H1 (cell line): ENCODE measurements at regions of chr1 and their contacts with region 1.

Region 1: DNA sequence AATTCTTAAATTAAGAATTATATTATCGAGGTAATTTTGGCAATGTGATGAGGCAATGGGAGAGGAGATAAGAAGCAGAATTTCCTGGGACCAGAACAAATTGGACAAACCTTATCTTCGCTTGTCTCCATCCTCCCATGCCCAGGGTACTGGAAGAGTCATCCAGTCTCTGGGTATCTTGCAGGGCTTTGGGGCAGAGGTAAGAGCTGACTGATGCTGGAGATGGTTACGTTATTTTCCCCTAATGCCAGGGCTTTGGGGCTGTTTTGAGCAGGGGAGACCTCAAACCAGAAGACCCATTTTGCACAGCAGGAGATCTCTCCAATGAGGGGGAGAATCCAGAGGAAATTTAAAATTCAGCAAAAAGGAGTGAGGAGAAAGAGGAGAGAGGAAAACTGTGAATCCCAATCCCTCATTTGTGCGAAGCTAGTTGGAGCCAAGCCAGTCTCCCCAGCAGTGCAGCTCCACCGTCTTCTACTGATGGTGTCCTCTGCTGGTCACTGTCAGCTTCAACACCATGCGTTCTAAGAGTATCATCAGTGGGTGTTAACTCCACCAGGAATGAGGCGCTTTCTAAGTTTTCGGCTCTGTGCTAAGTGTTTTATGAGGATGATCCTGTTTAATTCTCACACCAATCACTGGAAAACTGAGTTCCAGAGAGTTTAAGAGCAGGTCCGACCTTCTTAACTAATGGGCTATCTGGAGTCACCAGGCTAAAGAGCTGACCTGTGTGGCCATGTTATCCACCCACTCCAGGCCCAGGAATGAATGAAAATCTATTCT is 86.8 kb upstream of the CD34 start:
- DNase-seq: peak in 1 of 2 experiments; percentile 72
- H3K4me3 ChIP-seq: no peak overlapping the region
- H3K27ac ChIP-seq: no peak overlapping the region
- H3K4me1 ChIP-seq: peaks cover 0 to 9% (median 6%) of the 10 kb centered on the region in 4 experiments; a peak in 6 of 7 replicates
- H3K27me3 ChIP-seq: no peaks in the 10 kb centered on the region
- CTCF ChIP-seq: peak; percentile 80 to 92 (median 87)
- EP300 ChIP-seq: no peak
- POLR2A ChIP-seq: no peak
- RAD21 ChIP-seq: peak; percentile 47 to 59

Region 2: DNA sequence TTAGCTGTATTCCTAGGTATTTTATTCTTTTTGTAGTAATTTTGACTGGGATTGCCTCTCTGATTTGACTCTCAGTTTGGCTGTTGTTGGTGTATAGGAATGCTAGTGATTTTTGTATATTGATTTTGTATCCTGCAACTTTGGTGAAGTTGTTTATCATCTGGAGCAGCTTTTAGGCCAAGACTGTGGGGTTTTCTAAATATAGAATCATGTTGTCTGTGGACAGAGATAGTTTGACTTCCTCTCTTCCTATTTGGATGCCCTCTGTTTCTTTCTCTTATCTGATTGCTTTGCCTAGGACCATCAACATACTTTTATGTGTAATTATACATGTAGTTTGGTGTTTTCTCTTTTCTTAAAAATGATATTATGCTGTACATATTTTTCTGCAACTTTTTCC is 218.7 kb before region 1 on chr1:
- CTCF ChIA-PET with region 1: no interaction called
- POLR2A ChIA-PET with region 1: no interaction called
- DNase-seq: no peak
- H3K4me3 ChIP-seq: no peak overlapping the region
- H3K27ac ChIP-seq: no peak overlapping the region
- H3K4me1 ChIP-seq: no peaks in the 10 kb centered on the region
- H3K27me3 ChIP-seq: no peaks in the 10 kb centered on the region
- CTCF ChIP-seq: no peak
- EP300 ChIP-seq: no peak
- POLR2A ChIP-seq: no peak
- RAD21 ChIP-seq: no peak

Region 3: DNA sequence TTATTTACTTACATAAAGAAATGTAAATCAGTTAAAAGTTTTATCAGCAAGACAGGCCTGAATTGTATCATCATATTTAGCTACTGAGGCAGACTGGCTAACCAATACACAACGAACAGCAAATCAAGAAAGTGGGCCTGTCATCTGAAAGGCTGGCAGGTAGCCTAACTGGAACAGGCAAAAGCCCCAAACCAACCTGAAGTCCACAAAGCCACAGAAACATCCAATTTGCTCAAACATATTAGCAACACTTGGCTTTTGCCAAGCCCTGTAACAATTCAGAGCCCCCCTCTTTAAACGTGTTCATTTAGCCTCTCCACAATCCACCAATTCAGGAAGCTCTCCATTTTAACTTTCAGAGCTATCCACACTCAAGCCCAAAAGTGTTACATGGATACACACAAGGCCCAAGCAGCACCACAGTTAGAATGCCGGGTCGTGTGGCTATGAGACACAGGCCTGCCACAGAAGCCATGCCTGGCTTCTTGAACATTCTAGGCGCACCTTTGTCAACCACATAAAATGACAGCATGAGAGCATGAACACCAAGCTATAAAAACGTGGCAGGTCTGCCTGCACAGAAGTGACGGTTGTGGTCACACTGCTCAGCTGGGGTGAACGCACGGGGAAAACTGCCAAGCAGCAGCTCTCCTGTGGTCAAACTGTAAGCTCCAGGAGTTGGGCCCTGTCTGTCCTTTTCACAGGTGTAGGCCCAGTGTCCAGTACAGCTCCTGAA is 136.1 kb before region 1 on chr1:
- CTCF ChIA-PET with region 1: no interaction called
- POLR2A ChIA-PET with region 1: no interaction called
- DNase-seq: no peak
- H3K4me3 ChIP-seq: no peak overlapping the region
- H3K27ac ChIP-seq: no peak overlapping the region
- H3K4me1 ChIP-seq: no peaks in the 10 kb centered on the region; a peak in 1 of 7 replicates
- H3K27me3 ChIP-seq: no peaks in the 10 kb centered on the region
- CTCF ChIP-seq: no peak
- EP300 ChIP-seq: no peak
- POLR2A ChIP-seq: no peak
- RAD21 ChIP-seq: no peak

Region 4: DNA sequence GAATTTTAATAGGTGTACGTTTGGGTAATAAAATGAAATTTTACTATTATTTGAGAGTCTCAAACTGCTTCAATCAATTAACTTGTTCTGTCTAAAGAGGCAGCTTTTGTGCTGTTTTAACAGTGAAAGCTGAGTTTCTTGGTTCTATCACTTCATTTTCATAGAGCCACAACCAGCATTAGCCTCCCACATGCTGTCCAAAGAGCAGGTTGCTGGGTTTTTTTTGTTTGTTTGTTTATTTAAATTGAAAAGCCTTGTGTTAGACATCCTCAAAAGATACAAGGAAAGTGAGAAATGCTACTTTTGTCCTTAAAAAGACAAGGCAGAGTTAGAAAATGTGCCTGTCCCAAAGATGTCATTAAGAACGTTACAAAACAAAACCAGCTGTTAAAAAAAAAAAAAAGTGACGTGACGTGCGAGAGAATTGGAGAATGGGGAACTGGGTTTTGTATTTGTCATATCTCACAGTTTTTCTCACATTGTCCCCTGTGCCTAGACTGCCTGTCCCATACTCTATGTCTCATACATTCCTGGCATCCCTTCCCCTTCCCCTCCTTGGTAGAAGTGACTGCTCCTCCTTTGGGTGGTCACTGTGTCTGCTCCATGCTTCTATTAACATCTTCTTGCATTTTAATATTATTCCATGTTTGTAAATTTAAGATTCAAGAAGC is 23.6 kb before region 1 on chr1:
- CTCF ChIA-PET with region 1: interaction called, 13 read pairs
- POLR2A ChIA-PET with region 1: no interaction called
- DNase-seq: no peak
- H3K4me3 ChIP-seq: no peak overlapping the region
- H3K27ac ChIP-seq: no peak overlapping the region
- H3K4me1 ChIP-seq: no peaks in the 10 kb centered on the region
- H3K27me3 ChIP-seq: no peaks in the 10 kb centered on the region
- CTCF ChIP-seq: no peak
- EP300 ChIP-seq: no peak
- POLR2A ChIP-seq: no peak
- RAD21 ChIP-seq: no peak

Region 5: GRCh38 chr1:208013210-208013609 is 15.5 kb after region 1 on chr1:
- CTCF ChIA-PET with region 1: interaction called, 11 read pairs
- POLR2A ChIA-PET with region 1: no interaction called
- DNase-seq: no peak
- H3K4me3 ChIP-seq: no peak overlapping the region
- H3K27ac ChIP-seq: no peak overlapping the region
- H3K4me1 ChIP-seq: no peaks in the 10 kb centered on the region
- H3K27me3 ChIP-seq: no peaks in the 10 kb centered on the region
- CTCF ChIP-seq: no peak
- EP300 ChIP-seq: no peak
- POLR2A ChIP-seq: no peak
- RAD21 ChIP-seq: no peak

Region 6: GRCh38 chr1:208029381-208030287 is 32.0 kb after region 1 on chr1:
- CTCF ChIA-PET with region 1: interaction called, 20 read pairs
- POLR2A ChIA-PET with region 1: no interaction called
- DNase-seq: no peak
- H3K4me3 ChIP-seq: no peak overlapping the region
- H3K27ac ChIP-seq: no peak overlapping the region
- H3K4me1 ChIP-seq: no peaks in the 10 kb centered on the region
- H3K27me3 ChIP-seq: no peaks in the 10 kb centered on the region
- CTCF ChIP-seq: no peak
- EP300 ChIP-seq: no peak
- POLR2A ChIP-seq: no peak
- RAD21 ChIP-seq: no peak

Region 7: GRCh38 chr1:208093754-208094719 is 96.4 kb after region 1 on chr1:
- CTCF ChIA-PET with region 1: interaction called, 13 read pairs
- POLR2A ChIA-PET with region 1: no interaction called
- DNase-seq: peak; percentile 39 to 90
- H3K4me3 ChIP-seq: no peak overlapping the region
- H3K27ac ChIP-seq: no peak overlapping the region
- H3K4me1 ChIP-seq: peaks cover 1 to 7% (median 4%) of the 10 kb centered on the region in 4 experiments; a peak in 5 of 7 replicates
- H3K27me3 ChIP-seq: no peaks in the 10 kb centered on the region
- CTCF ChIP-seq: peak; percentile 88 to 94 (median 89)
- EP300 ChIP-seq: no peak
- POLR2A ChIP-seq: no peak
- RAD21 ChIP-seq: peak; percentile 76 to 85

Region 8: DNA sequence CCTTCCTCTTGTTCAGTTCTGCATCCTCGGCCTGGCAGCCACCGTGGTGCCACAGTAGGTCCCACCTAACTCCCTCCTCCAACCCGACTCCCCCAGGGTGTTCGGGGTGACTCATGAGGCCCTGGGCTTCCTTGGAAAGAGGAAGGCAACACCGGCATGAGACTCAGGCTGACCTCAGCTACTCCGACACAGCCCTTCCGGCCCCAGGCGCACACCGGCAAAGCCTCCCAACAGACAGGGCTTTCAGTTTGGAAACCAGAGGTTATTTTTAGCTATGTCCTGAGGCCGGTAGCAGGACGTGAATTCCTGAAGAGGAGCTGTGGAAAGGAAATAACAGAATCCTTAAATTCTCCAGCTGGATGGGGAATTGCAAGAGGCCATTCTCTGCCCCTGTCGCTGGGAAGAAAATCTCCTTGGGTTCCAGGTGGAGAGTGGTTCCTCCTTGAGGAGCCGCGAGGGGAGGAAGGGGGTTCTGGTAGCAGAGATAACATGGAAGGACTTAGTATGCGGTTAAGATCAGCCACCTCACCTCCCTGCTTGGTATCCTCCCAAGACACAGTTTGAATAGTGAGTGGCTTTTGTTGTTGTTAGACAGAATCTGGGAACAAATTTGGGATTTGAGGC is 222.1 kb after region 1 on chr1:
- CTCF ChIA-PET with region 1: no interaction called
- POLR2A ChIA-PET with region 1: no interaction called
- DNase-seq: no peak
- H3K4me3 ChIP-seq: no peak overlapping the region
- H3K27ac ChIP-seq: no peak overlapping the region
- H3K4me1 ChIP-seq: no peaks in the 10 kb centered on the region
- H3K27me3 ChIP-seq: no peaks in the 10 kb centered on the region
- CTCF ChIP-seq: no peak
- EP300 ChIP-seq: no peak
- POLR2A ChIP-seq: no peak
- RAD21 ChIP-seq: no peak

Region 9: GRCh38 chr1:208251911-208252835 is 254.5 kb after region 1 on chr1:
- CTCF ChIA-PET with region 1: interaction called, 10 read pairs
- POLR2A ChIA-PET with region 1: no interaction called
- DNase-seq: peak in 1 of 2 experiments; percentile 84
- H3K4me3 ChIP-seq: peak overlapping the region in 1 of 4 experiments; percentile 22; a peak in 1 of 8 replicates
- H3K27ac ChIP-seq: no peak overlapping the region
- H3K4me1 ChIP-seq: peaks cover 0 to 7% (median under 1%) of the 10 kb centered on the region in 4 experiments; a peak in 5 of 7 replicates
- H3K27me3 ChIP-seq: peaks cover 3 to 15% (median 13%) of the 10 kb centered on the region in 4 experiments; a peak in 6 of 7 replicates
- CTCF ChIP-seq: peak; percentile 63 to 72 (median 69)
- EP300 ChIP-seq: no peak
- POLR2A ChIP-seq: no peak
- RAD21 ChIP-seq: peak; percentile 66 to 82